Transverse colon (tissue), 4 donors: ENCODE measurements at regions of chr3 and their contacts with region 1.

Region 1: DNA sequence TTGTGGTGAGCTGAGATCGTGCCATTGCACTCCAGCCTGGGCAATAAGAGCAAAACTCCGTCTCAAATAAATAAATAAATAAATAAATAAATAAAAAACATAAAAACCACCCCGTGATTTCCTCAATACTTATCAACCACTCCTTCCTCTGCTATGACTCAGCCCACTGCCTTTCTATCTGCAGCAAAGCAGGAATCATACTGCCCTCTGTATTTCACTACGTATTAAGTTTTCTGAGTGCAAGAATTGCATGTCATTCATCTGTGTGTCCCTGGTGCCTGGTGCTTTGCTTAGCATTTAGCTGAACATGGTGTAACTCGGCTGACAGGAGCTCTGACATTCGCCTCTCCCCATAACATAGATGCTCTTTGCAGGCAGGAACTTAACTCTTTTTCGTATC is 7.1 kb downstream of the LSG1 start:
- DNase-seq: no peak
- H3K4me3 ChIP-seq: no peak overlapping the region
- H3K27ac ChIP-seq: no peak overlapping the region
- H3K4me1 ChIP-seq: peaks cover 0 to 1% (median 0%) of the 10 kb centered on the region in 4 donors
- H3K27me3 ChIP-seq: no peaks in the 10 kb centered on the region
- CTCF ChIP-seq: no peak
- EP300 ChIP-seq: no peak
- POLR2A ChIP-seq: no peak

Region 2: GRCh38 chr3:196432137-196432879 is 1767.5 kb after region 1 on chr3 and contains the start of gene UBXN7:
- in situ Hi-C with region 1: no loop called
- intact Hi-C with region 1: loop called (anchors 5 kb)
- DNase-seq: peak; percentile 96
- H3K4me3 ChIP-seq: peak within 1 kb of the TSS; percentile 68 to 99 (median 90)
- H3K27ac ChIP-seq: peak within 1 kb of the TSS; percentile 89 to 96 (median 94)
- H3K4me1 ChIP-seq: peaks cover 8 to 27% (median 9%) of the 10 kb centered on the region in 4 donors
- H3K27me3 ChIP-seq: no peaks in the 10 kb centered on the region
- CTCF ChIP-seq: no peak
- EP300 ChIP-seq: no peak
- POLR2A ChIP-seq: peak; percentile 61
- total RNA-seq, gene UBXN7: 13.8 to 25.4 (median 15.4) TPM